K562 (cell line): ENCODE measurements at regions of chr2 and their contacts with region 1.

Region 1: GRCh38 chr2:172674034-172674967 is 61.3 kb upstream of the RAPGEF4 start:
- DNase-seq: peak; percentile 53 to 77 (median 64)
- ATAC-seq: peak; percentile 100
- H3K4me3 ChIP-seq: no peak overlapping the region
- H3K27ac ChIP-seq: no peak overlapping the region
- H3K4me1 ChIP-seq: peaks cover 4 to 6% of the 10 kb centered on the region in 2 experiments; a peak in 4 of 5 replicates
- H3K27me3 ChIP-seq: no peaks in the 10 kb centered on the region
- CTCF ChIP-seq: peak; percentile 82 to 92 (median 91)
- EP300 ChIP-seq: no peak
- POLR2A ChIP-seq: no peak
- RAD21 ChIP-seq: peak; percentile 54 to 85

Region 2: DNA sequence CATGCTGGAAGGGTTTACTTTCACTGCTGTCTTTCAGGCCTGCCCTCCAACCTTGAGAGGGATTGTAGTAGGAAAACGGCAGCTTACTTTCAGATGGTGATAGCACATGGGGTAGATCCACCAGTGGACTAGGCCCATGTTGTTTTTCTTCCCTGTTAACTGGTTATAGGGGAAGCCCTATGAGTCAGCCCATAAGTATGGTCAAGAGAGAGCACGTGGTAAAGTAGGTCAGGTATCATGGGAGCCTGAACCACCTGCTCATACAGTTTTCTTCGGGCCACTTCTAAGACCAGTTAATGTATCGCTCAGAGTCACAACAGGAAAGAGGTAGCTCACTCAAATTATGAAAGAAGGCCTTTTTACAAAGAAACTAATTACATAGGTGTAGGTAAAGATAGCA is 85.4 kb before region 1 on chr2:
- CTCF ChIA-PET with region 1: interaction called, 8 read pairs
- POLR2A ChIA-PET with region 1: no interaction called
- in situ Hi-C with region 1: no loop called
- intact Hi-C with region 1: loop called (anchors 1 kb)
- DNase-seq: no peak
- ATAC-seq: no peak
- H3K4me3 ChIP-seq: no peak overlapping the region
- H3K27ac ChIP-seq: no peak overlapping the region
- H3K4me1 ChIP-seq: no peaks in the 10 kb centered on the region
- H3K27me3 ChIP-seq: no peaks in the 10 kb centered on the region
- CTCF ChIP-seq: no peak
- EP300 ChIP-seq: no peak
- POLR2A ChIP-seq: no peak
- RAD21 ChIP-seq: no peak

Region 3: GRCh38 chr2:173064151-173064805 is 390.0 kb after region 1 on chr2:
- CTCF ChIA-PET with region 1: no interaction called
- POLR2A ChIA-PET with region 1: no interaction called
- in situ Hi-C with region 1: no loop called
- intact Hi-C with region 1: no loop called
- DNase-seq: no peak
- ATAC-seq: no peak
- H3K4me3 ChIP-seq: no peak overlapping the region
- H3K27ac ChIP-seq: no peak overlapping the region
- H3K4me1 ChIP-seq: no peaks in the 10 kb centered on the region
- H3K27me3 ChIP-seq: peaks cover 5 to 11% of the 10 kb centered on the region in 2 experiments; a peak in 4 of 5 replicates
- CTCF ChIP-seq: no peak
- EP300 ChIP-seq: no peak
- POLR2A ChIP-seq: no peak
- RAD21 ChIP-seq: no peak